Activated B cell treated with CpG ODN at 0.5 μM for 24 hours (primary cell): ENCODE measurements at regions of chr7 and their contacts with region 1.

Region 1: GRCh38 chr7:130440527-130441365 is at the start of gene CEP41:
- DNase-seq: peak; percentile 89
- ATAC-seq: peak; percentile 97
- H3K4me3 Mint-ChIP-seq: peak within 1 kb of the TSS; percentile 99
- H3K27ac Mint-ChIP-seq: peak within 1 kb of the TSS; percentile 95
- H3K4me1 Mint-ChIP-seq: peaks cover 14% of the 10 kb centered on the region
- H3K27me3 Mint-ChIP-seq: peaks cover 5% of the 10 kb centered on the region
- CTCF ChIP-seq: no peak
- total RNA-seq, gene CEP41: 5.1 and 6.6 TPM in 2 replicates

Region 2: GRCh38 chr7:129875745-129876411 is 564.9 kb before region 1 on chr7:
- CTCF ChIA-PET with region 1: no interaction called
- POLR2A ChIA-PET with region 1: no interaction called
- intact Hi-C with region 1: no loop called
- DNase-seq: no peak
- ATAC-seq: no peak
- H3K4me3 Mint-ChIP-seq: no peak overlapping the region
- H3K27ac Mint-ChIP-seq: no peak overlapping the region
- H3K4me1 Mint-ChIP-seq: peaks cover 13% of the 10 kb centered on the region
- H3K27me3 Mint-ChIP-seq: no peaks in the 10 kb centered on the region
- CTCF ChIP-seq: no peak

Region 3: GRCh38 chr7:130141161-130141883 is 299.4 kb before region 1 on chr7:
- CTCF ChIA-PET with region 1: no interaction called
- POLR2A ChIA-PET with region 1: no interaction called
- intact Hi-C with region 1: loop called (anchors 5 kb)
- DNase-seq: peak; percentile 51
- ATAC-seq: peak; percentile 83
- H3K4me3 Mint-ChIP-seq: peak overlapping the region; percentile 87
- H3K27ac Mint-ChIP-seq: peak overlapping the region; percentile 94
- H3K4me1 Mint-ChIP-seq: peaks cover 44% of the 10 kb centered on the region
- H3K27me3 Mint-ChIP-seq: no peaks in the 10 kb centered on the region
- CTCF ChIP-seq: no peak

Region 4: DNA sequence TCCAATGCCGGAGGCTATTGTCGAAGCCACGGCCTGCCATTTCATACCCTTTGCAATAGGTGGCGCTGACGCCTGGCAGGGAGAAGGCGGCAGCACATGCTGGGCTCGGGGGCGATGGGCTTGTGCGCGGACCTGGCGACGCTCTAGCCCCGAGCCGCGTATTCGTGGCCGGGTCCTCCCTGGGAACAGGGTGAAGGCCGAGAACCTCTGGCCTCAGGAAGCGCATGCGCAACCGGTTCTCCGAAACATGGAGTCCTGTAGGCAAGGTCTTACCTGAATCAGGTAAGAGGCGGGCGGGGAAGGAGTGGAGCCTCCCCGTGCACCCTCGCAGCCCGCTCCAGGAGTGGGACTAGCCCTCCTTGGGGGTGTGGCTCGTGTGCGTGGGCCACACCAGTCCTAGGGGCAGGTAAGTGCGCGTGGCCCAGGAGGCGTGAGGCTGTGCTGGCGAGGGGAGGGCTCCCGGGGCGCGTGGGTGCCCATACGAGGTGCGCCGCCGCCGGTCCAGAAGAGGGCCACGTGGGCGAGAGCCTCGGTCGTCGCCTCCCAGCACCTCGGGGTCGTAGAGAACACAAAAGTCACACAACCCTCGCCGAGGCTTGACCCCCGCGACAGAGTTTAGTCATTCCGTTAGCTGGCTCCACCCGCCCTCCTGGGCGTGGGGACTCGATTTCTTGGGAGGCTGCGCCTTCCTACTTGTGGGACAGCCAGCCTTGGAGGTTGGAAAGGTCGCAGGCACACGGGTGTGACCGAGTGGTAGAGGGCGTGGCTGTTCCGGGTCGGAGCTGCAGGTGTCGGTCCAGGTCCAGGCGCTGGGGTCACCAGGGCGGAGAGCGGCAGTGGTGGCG is 45.6 kb after region 1 on chr7:
- CTCF ChIA-PET with region 1: no interaction called
- POLR2A ChIA-PET with region 1: no interaction called
- intact Hi-C with region 1: loop called (anchors 1 kb)
- DNase-seq: peak; percentile 50
- ATAC-seq: peak; percentile 87
- H3K4me3 Mint-ChIP-seq: peak overlapping the region; percentile 87
- H3K27ac Mint-ChIP-seq: peak overlapping the region; percentile 33
- H3K4me1 Mint-ChIP-seq: peaks cover 23% of the 10 kb centered on the region
- H3K27me3 Mint-ChIP-seq: peaks cover 32% of the 10 kb centered on the region
- CTCF ChIP-seq: peak; percentile 60